Ascending aorta (tissue), 2 donors: ENCODE measurements at regions of chr10 and their contacts with region 1.

Region 1: GRCh38 chr10:100185364-100186252 is at the start of gene ERLIN1:
- DNase-seq: peak; percentile 51 to 96
- H3K4me3 ChIP-seq: peak within 1 kb of the TSS; percentile 70 to 76
- H3K27ac ChIP-seq: peak within 1 kb of the TSS; percentile 83 to 88
- H3K4me1 ChIP-seq: peaks cover 7 to 13% of the 10 kb centered on the region in 2 donors
- H3K27me3 ChIP-seq: no peaks in the 10 kb centered on the region
- CTCF ChIP-seq: no peak
- total RNA-seq, gene ERLIN1: 16.6 TPM

Region 2: DNA sequence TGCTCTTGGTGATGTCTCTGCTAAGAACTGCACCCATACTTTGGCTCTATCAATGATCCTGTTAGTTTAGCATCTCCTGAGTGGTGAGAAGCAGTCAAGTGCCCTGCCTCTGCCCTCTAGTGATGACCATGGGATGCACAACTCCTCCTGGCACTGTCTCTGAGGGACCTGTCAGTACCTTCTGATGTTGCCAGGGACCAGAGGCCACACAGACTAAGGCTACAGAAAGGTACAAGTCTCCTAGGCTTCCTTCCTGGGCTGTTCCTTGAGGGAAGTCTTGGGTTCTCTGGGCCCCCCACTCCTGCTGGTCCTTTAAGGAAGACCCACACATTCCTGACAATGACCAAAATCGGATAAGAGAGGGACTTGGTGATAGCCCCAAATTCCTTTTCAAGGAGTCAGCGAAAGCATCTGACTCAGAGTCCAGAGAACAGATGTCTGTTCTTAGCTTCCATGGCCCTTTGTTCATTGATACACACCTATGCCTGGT is 637.5 kb before region 1 on chr10:
- intact Hi-C with region 1: no loop called
- DNase-seq: no peak
- H3K4me3 ChIP-seq: no peak overlapping the region
- H3K27ac ChIP-seq: no peak overlapping the region
- H3K4me1 ChIP-seq: no peaks in the 10 kb centered on the region
- H3K27me3 ChIP-seq: no peaks in the 10 kb centered on the region
- CTCF ChIP-seq: no peak

Region 3: GRCh38 chr10:99620713-99621453 is 564.7 kb before region 1 on chr10:
- intact Hi-C with region 1: loop called (anchors 10 kb)
- DNase-seq: peak; percentile 85 to 97
- H3K4me3 ChIP-seq: peak overlapping the region; percentile 61 to 70
- H3K27ac ChIP-seq: peak overlapping the region; percentile 97 to 99
- H3K4me1 ChIP-seq: peaks cover 2 to 27% of the 10 kb centered on the region in 2 donors
- H3K27me3 ChIP-seq: no peaks in the 10 kb centered on the region
- CTCF ChIP-seq: no peak

Region 4: GRCh38 chr10:99845837-99846382 is 339.7 kb before region 1 on chr10:
- intact Hi-C with region 1: loop called (anchors 10 kb)
- DNase-seq: peak in 1 of 2 donors; percentile 93
- H3K4me3 ChIP-seq: peak overlapping the region; percentile 47 to 57
- H3K27ac ChIP-seq: no peak overlapping the region
- H3K4me1 ChIP-seq: peaks cover 0 to 5% of the 10 kb centered on the region in 2 donors
- H3K27me3 ChIP-seq: no peaks in the 10 kb centered on the region
- CTCF ChIP-seq: peak; percentile 88 to 95 (median 89)

Region 5: DNA sequence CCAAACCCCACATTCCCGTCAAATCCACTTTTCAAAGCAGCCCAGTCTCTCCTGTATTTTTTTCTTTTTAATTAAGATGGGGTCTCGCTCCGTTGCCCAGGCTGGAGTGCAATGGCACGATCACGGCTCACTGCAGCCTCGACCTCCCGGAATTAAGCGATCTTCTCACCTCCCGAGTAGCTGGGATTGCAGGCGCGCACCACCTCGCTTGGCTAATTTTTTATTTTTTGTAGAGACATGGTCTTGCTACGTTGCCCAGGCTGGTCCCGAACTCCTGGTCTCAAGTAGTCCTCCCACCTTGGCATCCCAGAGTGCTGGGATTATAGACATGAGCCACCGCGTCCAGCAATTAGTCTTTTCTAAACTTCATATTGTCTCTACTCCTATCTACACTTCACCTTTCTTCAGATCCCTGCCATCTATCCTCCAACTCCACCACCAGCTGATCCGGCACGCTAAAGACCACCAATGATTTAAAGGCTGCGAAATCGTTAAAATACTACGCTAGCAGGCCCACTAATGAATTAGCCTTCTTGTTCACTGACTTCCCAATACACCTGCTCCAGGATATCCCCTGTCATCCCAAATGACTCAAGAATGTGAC is 44.3 kb after region 1 on chr10:
- intact Hi-C with region 1: loop called (anchors 1 kb)
- DNase-seq: no peak
- H3K4me3 ChIP-seq: peak overlapping the region; percentile 83 to 87
- H3K27ac ChIP-seq: peak overlapping the region; percentile 64 to 79
- H3K4me1 ChIP-seq: peaks cover 0 to 11% of the 10 kb centered on the region in 2 donors
- H3K27me3 ChIP-seq: no peaks in the 10 kb centered on the region
- CTCF ChIP-seq: no peak

Region 6: GRCh38 chr10:100286051-100287033 is 100.7 kb after region 1 on chr10 and contains the start of gene BLOC1S2:
- intact Hi-C with region 1: loop called (anchors 5 kb)
- DNase-seq: peak; percentile 58 to 92
- H3K4me3 ChIP-seq: peak within 1 kb of the TSS; percentile 95 to 97
- H3K27ac ChIP-seq: peak within 1 kb of the TSS; percentile 97 to 99
- H3K4me1 ChIP-seq: peaks cover 0 to 21% of the 10 kb centered on the region in 2 donors
- H3K27me3 ChIP-seq: no peaks in the 10 kb centered on the region
- CTCF ChIP-seq: peak in 1 of 3 experiments; percentile 12
- total RNA-seq, gene BLOC1S2: 21.4 TPM

Region 7: GRCh38 chr10:101867931-101868330 is 1682.3 kb after region 1 on chr10:
- intact Hi-C with region 1: no loop called
- DNase-seq: no peak
- H3K4me3 ChIP-seq: no peak overlapping the region
- H3K27ac ChIP-seq: no peak overlapping the region
- H3K4me1 ChIP-seq: no peaks in the 10 kb centered on the region
- H3K27me3 ChIP-seq: no peaks in the 10 kb centered on the region
- CTCF ChIP-seq: no peak

Region 8: DNA sequence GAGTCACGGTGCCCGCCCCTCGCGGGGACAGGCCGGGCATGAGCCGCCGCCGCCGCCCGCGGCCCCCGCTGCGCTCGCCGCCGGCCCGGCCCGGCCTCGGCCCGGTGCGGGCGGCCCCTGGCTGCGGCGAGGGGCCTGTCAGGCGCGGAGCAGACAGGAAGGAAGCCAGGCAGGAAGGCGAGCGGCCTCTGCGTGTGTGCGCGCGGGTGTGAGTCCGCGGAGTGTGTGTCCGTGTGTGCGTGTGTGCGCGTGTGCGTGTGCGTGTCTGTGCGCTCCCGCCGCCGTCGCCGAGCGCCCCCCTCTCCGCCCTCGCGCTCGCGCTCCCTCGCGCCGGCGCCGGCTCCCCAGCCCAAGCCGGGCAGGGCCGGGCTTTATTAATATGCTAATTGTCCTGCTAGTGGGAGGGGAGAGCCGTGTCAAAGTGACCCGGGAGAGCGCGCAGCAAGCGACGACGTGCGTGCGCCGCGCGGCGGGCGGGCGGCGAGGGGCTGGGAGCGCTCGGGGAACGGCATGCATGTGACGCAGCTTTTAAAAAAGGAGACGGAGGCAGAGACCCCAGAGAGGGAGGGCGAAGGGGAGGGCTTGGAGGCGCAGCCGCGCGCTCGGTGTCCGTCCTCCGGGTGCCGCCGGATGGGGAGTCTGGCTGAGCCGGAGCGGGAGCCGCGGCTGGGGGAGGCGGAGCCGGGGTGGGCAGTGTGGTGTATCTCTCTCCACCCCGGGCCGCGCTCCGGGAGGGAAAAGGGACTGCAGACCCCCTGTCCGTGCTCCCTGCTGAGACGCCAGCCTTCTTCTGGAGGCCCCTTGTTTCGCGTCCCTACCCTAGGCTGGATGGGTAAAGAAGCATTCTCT is 1934.8 kb after region 1 on chr10 and contains the start of gene LDB1:
- intact Hi-C with region 1: loop called (anchors 10 kb)
- DNase-seq: peak in 1 of 2 donors; percentile 86
- H3K4me3 ChIP-seq: peak within 1 kb of the TSS; percentile 88 to 94
- H3K27ac ChIP-seq: peak within 1 kb of the TSS; percentile 98 to 100
- H3K4me1 ChIP-seq: peaks cover 24 to 37% of the 10 kb centered on the region in 2 donors
- H3K27me3 ChIP-seq: no peaks in the 10 kb centered on the region
- CTCF ChIP-seq: peak in 1 of 3 experiments; percentile 34
- total RNA-seq, gene LDB1: 29.8 TPM